Panc1 (cell line): ENCODE measurements at regions of chr11 and their contacts with region 1.

Region 1: DNA sequence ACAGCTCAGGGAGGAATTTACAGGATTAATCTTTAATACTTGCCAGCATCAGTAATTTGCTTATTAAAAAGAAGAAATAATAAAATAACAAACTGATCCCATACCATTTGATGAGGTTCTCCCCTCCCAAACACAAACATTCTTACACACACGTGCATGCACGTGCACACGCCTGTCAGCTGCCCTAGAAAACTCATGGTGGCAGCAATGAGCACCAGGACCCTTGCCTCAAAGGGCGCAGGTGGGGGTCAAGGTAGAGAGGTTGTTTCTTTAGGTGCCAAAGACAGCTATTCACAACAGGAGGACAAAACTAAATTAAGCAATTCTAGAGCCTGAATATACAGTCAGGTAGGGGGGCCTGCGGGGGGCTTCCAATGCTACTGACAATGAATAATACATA is 219.3 kb downstream of the BUD13 start:
- DNase-seq: no peak
- ATAC-seq: no peak
- H3K4me3 ChIP-seq: no peak overlapping the region
- H3K27ac ChIP-seq: no peak overlapping the region
- H3K4me1 ChIP-seq: no peaks in the 10 kb centered on the region; the same call in 1 of the 2 replicates
- H3K27me3 ChIP-seq: no peaks in the 10 kb centered on the region
- CTCF ChIP-seq: no peak

Region 2: DNA sequence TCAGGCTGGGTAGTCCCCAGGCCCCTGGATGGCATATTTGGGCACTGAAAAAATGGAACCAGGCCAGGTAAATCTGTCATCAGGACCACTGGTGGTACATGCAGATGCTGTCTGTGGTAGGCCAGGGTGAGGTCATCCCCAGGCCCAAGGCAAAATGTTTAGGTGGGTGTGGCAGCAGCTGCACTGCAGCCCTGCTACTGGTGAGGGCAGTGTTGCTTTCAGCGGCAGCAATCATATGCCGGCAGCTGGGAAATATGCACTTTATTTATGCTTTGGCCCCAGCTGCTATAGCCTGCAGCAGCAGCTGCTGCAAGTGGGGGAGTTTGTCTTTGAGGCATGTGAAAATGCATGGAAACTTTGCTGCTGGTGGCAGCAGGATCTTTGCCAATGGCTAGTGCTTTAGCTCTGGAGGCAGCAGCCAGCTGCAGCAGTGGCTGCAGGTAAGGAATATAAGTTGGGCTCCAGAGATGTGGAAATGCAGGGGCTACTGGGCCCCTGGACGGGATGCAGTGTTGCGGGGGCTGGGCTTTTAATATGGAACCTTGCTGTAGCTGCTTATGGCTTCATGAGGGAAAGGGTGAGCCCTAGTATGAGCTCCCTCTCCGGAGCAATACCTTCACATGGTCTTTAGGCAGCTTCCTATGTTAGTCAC is 683.6 kb before region 1 on chr11:
- CTCF ChIA-PET with region 1: no interaction called
- POLR2A ChIA-PET with region 1: no interaction called
- in situ Hi-C with region 1: no loop called
- intact Hi-C with region 1: no loop called
- DNase-seq: peak; percentile 13
- ATAC-seq: 0 out of 2 replicates have a peak, but pooled peaks have one; percentile 48
- H3K4me3 ChIP-seq: no peak overlapping the region
- H3K27ac ChIP-seq: no peak overlapping the region
- H3K4me1 ChIP-seq: no peaks in the 10 kb centered on the region
- H3K27me3 ChIP-seq: no peaks in the 10 kb centered on the region
- CTCF ChIP-seq: peak; percentile 62

Region 3: GRCh38 chr11:116312570-116313391 is 240.7 kb before region 1 on chr11:
- CTCF ChIA-PET with region 1: no interaction called
- POLR2A ChIA-PET with region 1: interaction called, 12 read pairs
- in situ Hi-C with region 1: no loop called
- intact Hi-C with region 1: no loop called
- DNase-seq: no peak
- ATAC-seq: no peak
- H3K4me3 ChIP-seq: no peak overlapping the region
- H3K27ac ChIP-seq: no peak overlapping the region
- H3K4me1 ChIP-seq: no peaks in the 10 kb centered on the region
- H3K27me3 ChIP-seq: peaks cover 2% of the 10 kb centered on the region
- CTCF ChIP-seq: no peak